Activated B cell treated with CpG ODN at 0.5 μM for 24 hours (primary cell): ENCODE measurements at regions of chr9 and their contacts with region 1.

Region 1: GRCh38 chr9:133335878-133336811 is at the start of gene SURF6:
- DNase-seq: peak; percentile 94
- ATAC-seq: peak; percentile 93
- H3K4me3 Mint-ChIP-seq: peak within 1 kb of the TSS; percentile 97
- H3K27ac Mint-ChIP-seq: peak within 1 kb of the TSS; percentile 92
- H3K4me1 Mint-ChIP-seq: peaks cover 57% of the 10 kb centered on the region
- H3K27me3 Mint-ChIP-seq: no peaks in the 10 kb centered on the region
- CTCF ChIP-seq: no peak
- total RNA-seq, gene SURF6: 22.4 and 23.9 TPM in 2 replicates

Region 2: GRCh38 chr9:133301253-133302230 is 34.6 kb before region 1 on chr9:
- CTCF ChIA-PET with region 1: no interaction called
- POLR2A ChIA-PET with region 1: no interaction called
- intact Hi-C with region 1: no loop called
- DNase-seq: no peak
- ATAC-seq: no peak
- H3K4me3 Mint-ChIP-seq: no peak overlapping the region
- H3K27ac Mint-ChIP-seq: no peak overlapping the region
- H3K4me1 Mint-ChIP-seq: no peaks in the 10 kb centered on the region
- H3K27me3 Mint-ChIP-seq: peaks cover 9% of the 10 kb centered on the region
- CTCF ChIP-seq: no peak

Region 3: GRCh38 chr9:133347985-133348717 is 12.0 kb after region 1 on chr9 and contains the starts of genes MED22 and RPL7A:
- CTCF ChIA-PET with region 1: interaction called, 5 read pairs
- POLR2A ChIA-PET with region 1: interaction called, 32 read pairs
- intact Hi-C with region 1: loop called (anchors 1 kb)
- DNase-seq: peak; percentile 82
- ATAC-seq: peak; percentile 83
- H3K4me3 Mint-ChIP-seq: peak within 1 kb of the TSS; percentile 99
- H3K27ac Mint-ChIP-seq: peak within 1 kb of the TSS; percentile 96
- H3K4me1 Mint-ChIP-seq: peaks cover 45% of the 10 kb centered on the region
- H3K27me3 Mint-ChIP-seq: no peaks in the 10 kb centered on the region
- CTCF ChIP-seq: no peak
- total RNA-seq, gene MED22: 40.7 and 45.7 TPM in 2 replicates
- total RNA-seq, gene RPL7A: 3,786 and 4,134 TPM in 2 replicates

Region 4: DNA sequence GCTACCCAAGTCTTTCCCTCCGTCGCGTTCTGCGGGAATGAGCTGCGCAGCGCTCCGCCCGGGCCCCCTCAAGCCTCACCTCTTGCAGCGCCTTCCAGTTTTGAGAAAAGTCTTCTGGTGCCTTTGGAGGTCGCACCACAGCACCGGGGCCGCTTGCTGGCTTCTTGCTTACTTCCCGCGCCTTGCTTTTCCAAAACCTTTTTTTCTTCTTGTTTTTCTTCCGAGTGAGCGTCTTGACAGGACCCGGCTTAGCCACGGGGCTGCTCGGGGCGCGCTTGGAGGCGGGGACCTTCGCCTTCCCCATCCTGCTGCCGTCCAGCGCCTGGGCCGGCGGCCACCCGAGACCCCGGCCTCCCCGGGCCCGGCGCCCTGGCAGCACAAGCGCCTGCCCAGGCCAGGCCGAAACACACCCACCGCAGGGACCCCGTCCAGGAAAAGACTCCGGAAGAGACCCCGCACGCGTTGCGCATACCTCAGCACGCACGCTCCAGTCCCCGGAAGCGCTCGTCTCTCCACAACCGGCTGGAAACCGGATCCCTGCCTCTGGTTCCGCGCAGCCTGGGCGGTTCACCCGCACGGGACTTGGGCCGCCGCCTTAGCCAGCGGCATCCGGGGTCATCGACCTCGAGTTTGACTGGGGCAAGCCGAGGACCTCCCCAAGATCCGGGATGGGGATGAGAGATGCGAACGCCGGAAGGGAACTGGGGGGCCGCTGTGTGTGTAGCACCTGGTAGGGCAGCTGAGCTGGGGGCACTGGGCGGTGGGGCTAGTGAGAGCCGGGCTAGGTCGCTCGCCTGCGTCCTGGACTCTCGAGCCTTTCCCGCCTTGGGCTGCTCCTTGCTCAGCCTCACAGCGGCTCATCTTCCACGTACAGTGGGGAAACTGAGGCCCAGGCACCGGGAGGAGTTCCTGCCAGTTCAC is 81.7 kb after region 1 on chr9 and contains the start of gene REXO4:
- CTCF ChIA-PET with region 1: no interaction called
- POLR2A ChIA-PET with region 1: no interaction called
- intact Hi-C with region 1: loop called (anchors 1 kb)
- DNase-seq: peak; percentile 86
- ATAC-seq: peak; percentile 84
- H3K4me3 Mint-ChIP-seq: peak within 1 kb of the TSS; percentile 90
- H3K27ac Mint-ChIP-seq: peak within 1 kb of the TSS; percentile 91
- H3K4me1 Mint-ChIP-seq: peaks cover 71% of the 10 kb centered on the region
- H3K27me3 Mint-ChIP-seq: no peaks in the 10 kb centered on the region
- CTCF ChIP-seq: no peak
- total RNA-seq, gene REXO4: 31.6 and 33.3 TPM in 2 replicates

Region 5: GRCh38 chr9:133429641-133430161 is 93.6 kb after region 1 on chr9:
- CTCF ChIA-PET with region 1: no interaction called
- POLR2A ChIA-PET with region 1: no interaction called
- intact Hi-C with region 1: no loop called
- DNase-seq: peak; percentile 40
- ATAC-seq: peak; percentile 74
- H3K4me3 Mint-ChIP-seq: peak overlapping the region; percentile 74
- H3K27ac Mint-ChIP-seq: no peak overlapping the region
- H3K4me1 Mint-ChIP-seq: peaks cover 13% of the 10 kb centered on the region
- H3K27me3 Mint-ChIP-seq: peaks cover 16% of the 10 kb centered on the region
- CTCF ChIP-seq: no peak